ENCODE measurements at regions of chr15 and their contacts with region 1.

Region 1: DNA sequence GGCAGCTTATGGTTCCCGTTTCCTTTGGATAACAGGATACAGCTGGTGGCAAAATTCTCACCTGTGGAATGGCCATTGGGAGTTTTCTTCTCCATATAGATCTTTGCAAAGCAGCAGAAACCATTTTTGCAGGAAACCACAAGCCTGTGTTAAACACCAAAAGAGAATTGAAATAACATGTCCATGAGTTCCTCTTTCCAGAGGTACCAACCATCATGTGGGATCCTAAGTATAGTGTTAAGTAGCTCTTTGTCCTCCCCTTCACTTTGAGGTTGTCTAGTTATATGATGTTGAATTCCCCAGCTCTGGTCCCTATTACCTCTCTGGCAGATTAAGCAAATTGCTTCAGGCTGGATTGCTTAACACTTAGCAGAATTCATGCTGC is 94.9 kb downstream of the AKAP13 start:
- DNase-seq: peak; percentile 85
- H3K4me3 ChIP-seq: peak overlapping the region; percentile 52
- H3K27ac ChIP-seq: peak overlapping the region; percentile 92
- H3K4me1 ChIP-seq: peaks cover 99% of the 10 kb centered on the region
- CTCF ChIP-seq: no peak

Region 2: DNA sequence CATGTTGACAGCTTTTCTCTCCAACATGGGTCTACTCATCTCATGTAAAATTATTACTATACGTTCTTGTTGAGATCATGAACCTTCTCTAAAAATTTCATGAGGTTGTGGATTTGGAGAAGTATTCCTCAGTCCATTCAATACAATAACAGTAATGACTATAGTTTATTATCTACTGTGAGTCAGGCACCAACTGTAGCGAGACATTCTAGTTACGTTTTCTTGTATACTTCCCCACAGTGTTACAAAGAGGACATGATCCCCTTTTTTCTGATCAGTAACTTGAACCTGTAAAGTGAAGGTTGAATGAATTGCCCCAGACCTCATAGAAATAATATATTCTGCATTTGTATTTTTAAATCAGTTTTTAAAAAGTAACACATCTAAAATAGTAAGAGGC is 18.5 kb before region 1 on chr15:
- CTCF ChIA-PET with region 1: interaction called, 4 read pairs
- POLR2A ChIA-PET with region 1: interaction called, 20 read pairs
- intact Hi-C with region 1: no loop called
- DNase-seq: no peak
- H3K4me3 ChIP-seq: peak overlapping the region; percentile 28
- H3K27ac ChIP-seq: peak overlapping the region; percentile 42
- H3K4me1 ChIP-seq: peaks cover 98% of the 10 kb centered on the region
- CTCF ChIP-seq: no peak

Region 3: GRCh38 chr15:85639752-85640381 is 164.6 kb after region 1 on chr15:
- CTCF ChIA-PET with region 1: no interaction called
- POLR2A ChIA-PET with region 1: no interaction called
- intact Hi-C with region 1: no loop called
- DNase-seq: no peak
- H3K4me3 ChIP-seq: no peak overlapping the region
- H3K27ac ChIP-seq: no peak overlapping the region
- H3K4me1 ChIP-seq: no peaks in the 10 kb centered on the region
- CTCF ChIP-seq: no peak